AG04449 (cell line): ENCODE measurements at regions of chr10 and their contacts with region 1.

Region 1: DNA sequence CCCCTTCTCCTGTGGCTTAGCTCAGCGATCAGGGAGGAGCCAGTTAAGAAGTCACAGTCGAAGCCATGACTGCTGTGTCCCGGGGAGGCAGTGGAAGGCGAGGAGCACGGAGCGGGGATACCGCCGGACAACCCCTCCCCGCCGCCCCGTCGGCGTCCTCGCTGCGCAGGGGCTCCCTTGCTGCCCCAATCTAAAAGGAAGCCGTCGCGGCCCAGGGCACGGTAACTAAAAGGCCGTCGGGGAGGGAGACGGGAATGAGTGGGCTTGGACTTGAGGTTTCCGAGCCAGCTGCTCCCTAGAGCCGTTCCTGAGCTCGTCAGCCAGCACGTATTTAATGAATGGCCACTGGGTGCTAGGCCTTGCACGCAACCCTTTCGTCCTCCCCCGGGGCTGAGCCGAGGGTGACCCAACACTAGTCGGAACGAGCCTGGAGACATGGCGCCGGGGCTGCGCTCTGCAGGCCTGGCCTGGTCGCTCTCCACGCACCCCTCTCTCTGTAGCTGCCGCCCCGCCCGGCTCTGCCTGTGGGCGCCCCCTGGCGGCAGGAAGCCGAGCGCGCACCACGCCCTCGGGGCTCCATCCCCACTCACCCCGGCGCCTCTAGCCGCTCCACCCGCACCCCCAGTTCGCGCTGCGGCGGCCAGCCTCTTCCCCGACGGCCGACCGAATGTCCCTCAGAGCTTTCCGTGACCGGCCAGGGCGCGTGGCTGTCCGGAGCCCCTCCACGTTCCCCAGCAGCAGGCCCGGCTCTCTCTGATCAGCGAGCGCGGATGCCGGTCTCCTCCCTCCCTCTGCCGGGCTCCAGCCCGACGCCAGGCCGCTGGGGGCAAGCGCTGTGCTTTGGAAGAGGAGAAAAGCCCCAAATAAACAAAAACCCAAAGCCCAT is 29.3 kb upstream of the KCNK18 start:
- DNase-seq: no peak
- H3K4me3 ChIP-seq: no peak overlapping the region
- CTCF ChIP-seq: peak; percentile 89

Region 2: DNA sequence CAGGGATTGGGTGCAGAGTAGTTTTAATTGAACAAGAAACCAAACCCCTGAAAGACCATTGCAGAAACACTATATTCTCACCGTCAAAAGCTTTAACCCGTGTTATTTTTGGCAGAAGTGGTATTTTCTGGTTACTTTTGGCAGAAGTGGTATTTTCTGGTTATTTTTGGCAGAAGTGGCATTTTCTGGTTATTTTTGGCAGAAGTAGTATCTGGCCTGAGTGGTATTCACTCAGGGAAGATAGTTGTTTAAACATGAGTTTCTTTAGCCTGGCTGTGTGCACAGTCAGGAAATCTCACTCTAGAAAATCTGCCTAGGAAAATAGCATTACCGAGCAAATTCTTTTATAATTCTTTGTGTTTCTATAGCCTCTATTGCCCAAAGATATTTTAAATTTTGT is 1217.7 kb before region 1 on chr10:
- CTCF ChIA-PET with region 1: no interaction called
- POLR2A ChIA-PET with region 1: no interaction called
- DNase-seq: no peak
- H3K4me3 ChIP-seq: no peak overlapping the region
- CTCF ChIP-seq: no peak

Region 3: DNA sequence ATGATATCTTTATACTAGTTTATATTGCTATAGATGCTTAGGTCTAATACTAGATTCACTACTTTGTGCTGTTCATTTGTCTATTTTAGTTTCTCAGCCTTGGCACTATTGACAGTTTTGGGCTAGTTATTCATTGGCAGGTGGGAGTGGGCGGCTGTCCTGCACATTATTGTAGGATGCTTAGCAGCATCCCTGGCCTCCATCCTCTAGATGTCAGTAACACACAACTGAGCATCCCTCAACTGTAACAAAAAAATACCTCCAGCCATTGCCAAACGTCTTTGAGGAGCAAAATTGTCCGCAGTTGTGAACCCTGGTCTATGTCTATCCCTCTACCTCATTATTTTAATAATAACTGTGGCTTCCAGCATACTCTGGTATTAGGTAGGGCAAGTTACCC is 656.7 kb before region 1 on chr10:
- CTCF ChIA-PET with region 1: no interaction called
- POLR2A ChIA-PET with region 1: no interaction called
- DNase-seq: no peak
- H3K4me3 ChIP-seq: no peak overlapping the region
- CTCF ChIP-seq: no peak

Region 4: DNA sequence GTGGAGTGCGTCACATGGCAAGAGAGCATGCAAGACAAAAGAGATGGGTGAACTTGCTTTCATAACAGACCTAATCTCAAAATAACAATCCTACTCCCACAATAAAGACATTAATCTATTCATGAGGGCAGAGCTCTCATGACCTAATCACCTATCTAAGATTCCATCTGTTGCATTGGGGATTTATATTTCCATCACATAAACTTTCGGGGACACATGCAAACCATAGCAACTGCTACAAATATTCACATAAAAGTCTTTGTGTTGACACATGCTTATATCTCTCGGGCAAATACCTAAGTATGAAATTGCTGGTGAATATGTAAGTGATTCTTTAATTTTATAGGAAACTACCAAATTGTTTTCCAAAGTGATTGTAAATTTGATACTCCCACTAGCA is 593.2 kb before region 1 on chr10:
- CTCF ChIA-PET with region 1: no interaction called
- POLR2A ChIA-PET with region 1: no interaction called
- DNase-seq: no peak
- H3K4me3 ChIP-seq: no peak overlapping the region
- CTCF ChIP-seq: no peak

Region 5: DNA sequence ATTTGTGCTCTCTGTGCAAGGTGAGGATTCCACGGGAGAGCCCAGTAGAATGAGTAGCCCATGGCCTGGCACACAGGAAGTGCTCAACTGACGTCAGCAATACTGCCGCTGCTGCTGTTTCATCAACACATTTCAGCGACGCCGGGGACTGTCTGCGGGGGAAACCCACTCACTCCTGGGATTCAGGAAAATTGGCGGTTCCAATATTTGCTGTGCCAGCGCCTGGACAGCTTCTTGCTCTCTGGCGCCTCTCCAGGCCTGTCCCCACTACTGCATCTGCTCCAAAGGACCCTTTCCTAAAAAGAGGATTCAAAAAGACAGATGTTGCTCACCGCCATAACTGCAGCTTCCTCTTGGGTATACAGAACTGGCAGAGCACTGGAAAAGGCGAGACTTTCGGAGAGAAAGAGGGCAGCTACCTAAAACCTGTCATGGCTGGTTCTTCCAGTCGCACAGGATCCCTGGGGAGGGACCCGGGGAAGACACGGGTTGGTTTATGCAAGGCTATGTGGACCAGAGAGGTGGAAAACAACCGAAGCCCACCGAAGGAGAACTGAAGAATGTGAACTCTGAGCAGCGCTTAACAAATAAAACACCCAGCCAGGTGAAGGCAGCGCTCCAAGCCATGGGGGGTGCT is 358.4 kb before region 1 on chr10:
- CTCF ChIA-PET with region 1: interaction called, 20 read pairs
- POLR2A ChIA-PET with region 1: no interaction called
- DNase-seq: no peak
- H3K4me3 ChIP-seq: no peak overlapping the region
- CTCF ChIP-seq: no peak

Region 6: DNA sequence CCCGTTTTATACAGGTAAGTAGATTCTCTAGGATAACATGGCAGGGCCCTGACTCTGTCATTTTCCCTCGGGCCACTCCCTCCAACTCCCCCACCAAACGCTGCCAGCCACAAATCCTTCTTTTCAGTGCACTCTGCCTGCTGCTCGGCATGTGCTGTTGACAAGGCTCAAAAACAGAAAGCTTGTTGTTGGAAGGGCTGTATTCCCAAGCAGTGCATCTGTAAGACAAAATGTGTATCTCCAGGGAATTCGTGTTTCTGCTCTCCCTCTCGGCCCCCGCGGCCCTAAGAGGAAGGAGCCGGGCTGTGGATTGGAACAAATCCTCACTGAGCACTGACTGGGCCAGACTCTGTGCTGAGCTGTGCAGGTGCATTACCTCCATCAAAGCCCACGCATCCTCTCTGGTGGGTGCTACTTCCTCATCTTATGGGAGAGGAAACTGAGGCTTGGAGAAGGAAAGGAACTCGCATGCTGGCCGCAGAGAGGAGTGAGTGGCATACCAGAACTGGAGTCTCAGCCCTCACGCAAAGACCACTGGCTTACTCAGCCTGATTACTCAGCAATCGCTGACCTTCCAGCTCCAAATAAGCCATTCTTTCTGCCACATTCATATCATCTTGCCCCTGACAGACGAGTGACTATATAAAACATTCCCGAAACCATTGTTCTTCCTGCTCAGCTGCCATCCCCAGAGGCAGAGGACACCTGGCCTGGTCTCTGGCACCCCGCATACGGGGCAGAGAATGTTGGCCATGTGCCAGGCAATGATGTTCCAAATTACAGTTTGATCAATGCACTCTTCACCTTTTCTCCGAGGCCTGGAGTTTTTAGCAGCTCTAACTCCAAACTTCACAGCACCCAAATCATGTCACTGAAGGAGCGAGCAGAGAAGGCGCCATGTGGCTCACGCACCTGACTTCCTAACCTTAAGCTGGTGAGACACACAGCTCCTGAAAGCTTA is 352.1 kb before region 1 on chr10:
- CTCF ChIA-PET with region 1: interaction called, 20 read pairs
- POLR2A ChIA-PET with region 1: no interaction called
- DNase-seq: no peak
- H3K4me3 ChIP-seq: no peak overlapping the region
- CTCF ChIP-seq: no peak

Region 7: DNA sequence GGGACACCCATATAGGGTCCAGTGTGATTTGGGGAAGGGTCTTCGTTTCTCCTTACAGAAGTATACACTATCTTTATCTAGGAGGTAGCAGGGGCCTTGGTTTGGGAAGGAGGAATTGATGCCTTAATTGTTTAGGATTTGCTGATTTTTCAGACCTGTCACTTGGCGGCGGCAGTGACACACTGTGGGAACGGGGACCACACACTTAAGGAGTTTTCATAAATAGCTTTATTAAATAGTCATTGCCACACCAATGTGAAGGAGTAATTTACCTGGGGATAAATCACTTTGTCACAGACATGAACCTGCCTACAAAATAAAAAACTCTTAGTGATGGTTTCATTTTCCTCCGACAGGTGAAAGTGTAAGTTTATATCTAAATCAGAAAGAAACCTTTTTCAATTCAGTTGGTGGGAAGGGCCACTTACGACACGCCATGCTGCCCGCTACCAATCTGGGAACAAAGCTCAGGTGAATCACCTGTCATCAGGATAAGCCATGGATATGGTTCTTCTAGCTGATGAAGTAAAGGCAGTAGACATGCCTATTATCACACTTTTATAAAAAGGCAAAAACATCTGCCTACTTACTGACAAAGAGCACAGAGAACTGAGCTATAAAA is 331.0 kb before region 1 on chr10:
- CTCF ChIA-PET with region 1: interaction called, 70 read pairs
- POLR2A ChIA-PET with region 1: interaction called, 3 read pairs
- DNase-seq: no peak
- H3K4me3 ChIP-seq: no peak overlapping the region
- CTCF ChIP-seq: peak; percentile 45

Region 8: GRCh38 chr10:117198088-117198487 is 30.1 kb after region 1 on chr10:
- CTCF ChIA-PET with region 1: no interaction called
- POLR2A ChIA-PET with region 1: no interaction called
- DNase-seq: no peak
- H3K4me3 ChIP-seq: no peak overlapping the region
- CTCF ChIP-seq: no peak